ENCODE measurements at regions of chr9 and their contacts with region 1.

Region 1: GRCh38 chr9:71353720-71354119 is 232.3 kb upstream of the TRPM3 start:
- DNase-seq: no peak
- ATAC-seq: no peak
- H3K4me3 Mint-ChIP-seq: no peak overlapping the region
- H3K27ac Mint-ChIP-seq: no peak overlapping the region
- H3K4me1 Mint-ChIP-seq: peaks cover 41% of the 10 kb centered on the region
- H3K27me3 Mint-ChIP-seq: no peaks in the 10 kb centered on the region
- CTCF ChIP-seq: no peak

Region 2: DNA sequence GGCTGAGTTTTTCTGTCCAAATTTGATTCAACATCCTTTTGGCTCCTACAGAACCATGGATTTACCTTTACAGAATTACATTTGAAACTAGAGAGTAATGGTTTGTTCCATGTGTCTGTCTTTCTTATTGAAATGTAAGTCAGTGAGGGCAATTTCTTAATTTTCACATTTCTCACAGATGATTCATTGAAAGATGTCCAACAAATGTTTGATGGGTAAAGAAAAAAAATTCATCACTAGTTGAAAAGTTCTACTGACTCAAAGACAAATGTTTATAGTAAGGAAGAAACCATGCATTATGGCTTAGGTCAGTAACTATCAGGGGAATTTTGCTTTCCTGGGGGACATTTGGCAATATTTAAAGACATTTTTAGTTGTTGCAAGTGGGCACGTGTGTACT is 100.7 kb before region 1 on chr9:
- CTCF ChIA-PET with region 1: no interaction called
- POLR2A ChIA-PET with region 1: no interaction called
- DNase-seq: no peak
- ATAC-seq: no peak
- H3K4me3 Mint-ChIP-seq: no peak overlapping the region
- H3K27ac Mint-ChIP-seq: no peak overlapping the region
- H3K4me1 Mint-ChIP-seq: peaks cover 23% of the 10 kb centered on the region
- H3K27me3 Mint-ChIP-seq: no peaks in the 10 kb centered on the region
- CTCF ChIP-seq: no peak

Region 3: GRCh38 chr9:71285191-71285656 is 68.5 kb before region 1 on chr9:
- CTCF ChIA-PET with region 1: interaction called, 19 read pairs
- POLR2A ChIA-PET with region 1: no interaction called
- DNase-seq: peak; percentile 24
- ATAC-seq: peak; percentile 95
- H3K4me3 Mint-ChIP-seq: no peak overlapping the region
- H3K27ac Mint-ChIP-seq: no peak overlapping the region
- H3K4me1 Mint-ChIP-seq: peaks cover 15% of the 10 kb centered on the region
- H3K27me3 Mint-ChIP-seq: no peaks in the 10 kb centered on the region
- CTCF ChIP-seq: peak; percentile 77

Region 4: DNA sequence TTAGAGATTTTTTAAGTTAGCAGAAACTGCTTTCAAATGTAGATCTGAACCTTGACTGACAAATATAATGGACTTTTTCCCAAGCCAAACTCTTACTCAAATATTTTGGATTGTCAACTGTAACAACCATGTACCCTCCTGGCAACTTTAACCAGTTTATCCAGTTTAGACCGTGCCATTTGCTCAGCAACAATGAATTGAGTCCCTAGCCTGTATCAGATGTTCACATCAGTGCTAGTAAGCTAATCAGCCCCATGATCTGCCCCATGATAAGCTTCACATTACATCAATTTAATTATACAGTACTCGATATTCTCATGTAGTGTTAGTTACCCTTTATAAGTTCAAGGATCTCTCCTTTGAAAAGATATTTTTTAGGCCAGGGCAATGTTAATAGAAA is 44.1 kb after region 1 on chr9:
- CTCF ChIA-PET with region 1: no interaction called
- POLR2A ChIA-PET with region 1: no interaction called
- DNase-seq: no peak
- ATAC-seq: no peak
- H3K4me3 Mint-ChIP-seq: no peak overlapping the region
- H3K27ac Mint-ChIP-seq: no peak overlapping the region
- H3K4me1 Mint-ChIP-seq: 0 out of 2 replicates have a peak, but pooled peaks cover 2% of the 10 kb centered on the region
- H3K27me3 Mint-ChIP-seq: no peaks in the 10 kb centered on the region
- CTCF ChIP-seq: no peak

Region 5: DNA sequence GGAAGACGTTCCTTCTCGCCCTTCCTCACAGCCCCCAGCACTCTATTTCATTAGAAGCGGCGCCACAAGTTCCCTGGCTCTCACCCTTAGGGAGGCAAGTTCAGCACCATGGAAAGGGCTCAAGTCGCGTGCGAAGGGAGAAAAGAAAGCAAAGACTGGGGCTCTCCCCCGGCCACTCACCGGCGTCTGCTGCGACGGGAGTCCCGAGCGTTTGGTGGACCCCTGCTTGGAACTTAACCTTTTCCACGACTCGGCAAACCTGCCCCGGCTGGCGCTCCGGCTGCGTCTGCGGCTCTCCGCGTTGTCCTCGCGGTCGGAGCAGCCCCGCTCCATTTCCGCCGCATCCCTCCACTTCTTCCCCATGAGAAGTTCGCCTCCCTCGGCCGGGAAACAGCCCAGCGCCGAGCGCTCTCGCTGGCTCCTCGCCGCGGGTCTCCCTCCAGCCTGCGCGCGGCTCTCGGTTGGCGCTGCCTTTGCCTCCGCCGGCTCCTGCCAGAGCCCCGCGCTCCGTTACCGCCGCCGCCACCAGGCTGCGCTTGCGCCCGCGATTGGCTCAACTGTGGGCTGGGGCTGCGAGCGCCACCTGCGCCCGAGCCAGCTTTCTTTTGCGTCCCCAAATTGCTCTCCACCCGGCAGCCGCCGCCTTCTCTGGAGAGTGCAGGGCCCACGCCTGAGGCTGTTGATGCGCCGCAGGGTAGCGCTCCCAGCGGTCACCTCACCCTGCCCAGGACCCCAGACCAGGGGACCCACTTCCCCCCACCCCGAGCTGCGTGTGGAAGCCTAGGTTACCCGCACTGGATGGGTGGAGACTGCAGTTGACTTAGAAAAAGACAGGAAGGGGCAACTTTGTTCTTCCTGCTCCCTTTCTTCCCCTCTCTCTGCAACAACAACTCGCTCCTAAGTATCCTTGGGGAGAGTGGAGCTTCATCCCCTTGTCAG is 93.0 kb after region 1 on chr9:
- CTCF ChIA-PET with region 1: interaction called, 20 read pairs
- POLR2A ChIA-PET with region 1: no interaction called
- DNase-seq: peak; percentile 88
- ATAC-seq: peak; percentile 88
- H3K4me3 Mint-ChIP-seq: peak overlapping the region; percentile 92
- H3K27ac Mint-ChIP-seq: peak overlapping the region; percentile 66; the same call in 1 of the 2 replicates
- H3K4me1 Mint-ChIP-seq: peaks cover 31% of the 10 kb centered on the region
- H3K27me3 Mint-ChIP-seq: peaks cover 7% of the 10 kb centered on the region; the same call in 1 of the 2 replicates
- CTCF ChIP-seq: no peak

Region 6: GRCh38 chr9:71806901-71807307 is 453.2 kb after region 1 on chr9:
- CTCF ChIA-PET with region 1: no interaction called
- POLR2A ChIA-PET with region 1: no interaction called
- DNase-seq: peak; percentile 57
- ATAC-seq: peak; percentile 100
- H3K4me3 Mint-ChIP-seq: no peak overlapping the region
- H3K27ac Mint-ChIP-seq: peak overlapping the region; percentile 58
- H3K4me1 Mint-ChIP-seq: peaks cover 17% of the 10 kb centered on the region
- H3K27me3 Mint-ChIP-seq: no peaks in the 10 kb centered on the region
- CTCF ChIP-seq: 0 out of 2 replicates have a peak, but pooled peaks have one; percentile 43

Measured in WTC11 (cell line).